ENCODE measurements at regions of chr4 and their contacts with region 1.

Region 1: DNA sequence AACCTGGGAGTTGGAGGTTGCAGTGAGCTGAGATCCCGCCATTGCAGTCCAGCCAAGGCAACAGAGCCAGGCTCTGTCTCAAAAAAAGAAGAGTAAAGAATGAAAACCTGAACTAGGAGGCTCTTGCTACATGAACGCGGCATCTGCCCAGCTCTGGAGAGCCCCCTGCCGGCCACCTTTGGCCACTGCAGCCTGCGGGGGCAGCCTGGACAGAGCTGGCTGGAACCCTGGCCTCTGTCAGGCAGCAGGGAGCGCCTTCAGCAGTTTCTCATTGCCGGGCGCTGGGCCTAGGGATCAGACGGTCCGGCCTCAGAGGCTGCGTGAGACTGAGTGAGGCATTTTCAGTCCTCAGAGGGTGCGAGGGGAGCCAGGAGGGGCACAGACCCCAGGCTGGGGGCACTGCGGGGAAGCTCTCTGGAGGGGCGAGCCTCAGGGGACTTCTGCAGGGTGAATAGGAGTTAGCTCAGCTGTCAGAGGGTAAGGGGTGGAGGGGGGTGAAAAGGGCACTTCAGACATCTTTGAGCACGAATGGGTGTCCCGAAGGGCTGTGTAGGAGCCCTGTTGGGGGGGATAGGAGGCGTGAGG is 17.5 kb downstream of the DOK7 start:
- DNase-seq: peak; percentile 77
- H3K4me3 Mint-ChIP-seq: no peak overlapping the region
- H3K27ac Mint-ChIP-seq: no peak overlapping the region
- H3K4me1 Mint-ChIP-seq: peaks cover 9% of the 10 kb centered on the region
- H3K27me3 Mint-ChIP-seq: no peaks in the 10 kb centered on the region
- CTCF ChIP-seq: peak; percentile 99

Region 2: DNA sequence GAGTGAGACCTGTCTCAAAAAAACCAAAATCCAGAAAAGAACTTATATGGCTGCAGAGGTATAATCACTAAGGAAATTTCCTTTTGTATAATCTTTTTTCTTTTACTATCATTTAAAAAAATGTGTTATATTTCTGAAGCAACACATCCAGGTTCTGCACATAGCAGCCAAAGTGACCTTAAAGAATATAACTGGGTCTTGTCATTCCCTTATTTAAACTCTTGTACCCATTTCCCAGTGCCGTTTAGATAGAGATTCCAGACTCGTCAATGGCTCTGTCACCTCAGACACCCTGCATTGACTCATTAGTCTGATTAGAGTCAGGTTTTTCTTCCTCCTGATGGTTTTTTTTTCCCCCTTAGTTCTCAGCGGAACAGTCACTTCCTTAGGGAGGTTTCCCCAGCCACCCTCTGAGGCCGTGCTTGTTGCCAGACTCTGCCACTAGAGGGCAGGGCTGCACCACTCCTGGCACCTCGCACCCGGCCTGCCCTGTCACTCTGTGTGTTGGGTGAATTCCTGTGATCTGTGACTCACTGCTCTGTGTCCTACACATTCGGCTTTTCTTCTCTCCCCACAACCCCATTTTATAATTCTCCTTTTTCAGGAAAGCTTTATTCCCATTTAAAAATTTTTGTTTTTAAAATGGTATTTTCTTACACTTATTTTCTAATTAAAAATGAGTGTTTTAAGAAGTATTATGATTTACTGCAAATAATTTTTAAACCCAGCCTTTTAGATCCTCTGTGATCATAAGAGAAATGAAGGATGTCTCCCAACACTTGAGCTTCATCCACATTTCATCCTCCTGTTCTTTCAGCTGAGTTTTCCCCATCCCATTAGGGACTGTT is 374.1 kb before region 1 on chr4:
- CTCF ChIA-PET with region 1: no interaction called
- POLR2A ChIA-PET with region 1: no interaction called
- intact Hi-C with region 1: loop called (anchors 1 kb)
- DNase-seq: peak; percentile 91
- H3K4me3 Mint-ChIP-seq: no peak overlapping the region
- H3K27ac Mint-ChIP-seq: peak overlapping the region; percentile 57
- H3K4me1 Mint-ChIP-seq: peaks cover 6% of the 10 kb centered on the region
- H3K27me3 Mint-ChIP-seq: no peaks in the 10 kb centered on the region
- CTCF ChIP-seq: peak; percentile 92

Region 3: DNA sequence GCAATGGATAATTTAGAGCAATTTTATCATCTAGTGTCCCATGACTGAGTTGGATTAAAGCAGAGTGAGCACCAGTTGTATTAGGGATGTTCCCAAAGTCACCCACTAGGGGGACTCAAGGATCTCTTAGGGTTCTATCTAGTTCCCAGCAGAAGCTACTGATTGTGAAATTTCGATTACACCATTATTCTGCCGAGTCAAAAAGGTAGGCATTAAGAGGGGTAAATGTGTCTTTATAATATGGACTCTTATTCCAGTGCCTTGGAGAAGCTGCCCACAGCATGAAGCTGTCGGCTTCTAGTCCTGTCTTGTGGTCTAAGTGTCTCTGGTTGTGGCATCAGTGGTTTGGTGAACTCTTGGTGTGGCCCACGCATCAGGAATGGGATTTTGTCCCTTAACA is 134.5 kb before region 1 on chr4:
- CTCF ChIA-PET with region 1: interaction called, 46 read pairs
- POLR2A ChIA-PET with region 1: interaction called, 9 read pairs
- intact Hi-C with region 1: loop called (anchors 1 kb)
- DNase-seq: peak; percentile 92
- H3K4me3 Mint-ChIP-seq: no peak overlapping the region
- H3K27ac Mint-ChIP-seq: no peak overlapping the region
- H3K4me1 Mint-ChIP-seq: peaks cover 9% of the 10 kb centered on the region
- H3K27me3 Mint-ChIP-seq: no peaks in the 10 kb centered on the region
- CTCF ChIP-seq: peak; percentile 91

Region 4: GRCh38 chr4:3458371-3458770 is 22.2 kb before region 1 on chr4:
- CTCF ChIA-PET with region 1: interaction called, 10 read pairs
- POLR2A ChIA-PET with region 1: interaction called, 7 read pairs
- intact Hi-C with region 1: no loop called
- DNase-seq: no peak
- H3K4me3 Mint-ChIP-seq: no peak overlapping the region
- H3K27ac Mint-ChIP-seq: no peak overlapping the region
- H3K4me1 Mint-ChIP-seq: peaks cover 6% of the 10 kb centered on the region
- H3K27me3 Mint-ChIP-seq: peaks cover 11% of the 10 kb centered on the region
- CTCF ChIP-seq: no peak

Region 5: GRCh38 chr4:3502941-3503936 is 22.6 kb after region 1 on chr4:
- CTCF ChIA-PET with region 1: interaction called, 15 read pairs
- POLR2A ChIA-PET with region 1: no interaction called
- intact Hi-C with region 1: no loop called
- DNase-seq: no peak
- H3K4me3 Mint-ChIP-seq: no peak overlapping the region
- H3K27ac Mint-ChIP-seq: no peak overlapping the region
- H3K4me1 Mint-ChIP-seq: no peaks in the 10 kb centered on the region
- H3K27me3 Mint-ChIP-seq: no peaks in the 10 kb centered on the region
- CTCF ChIP-seq: no peak